AG04449 (cell line): ENCODE measurements at regions of chr11 and their contacts with region 1.

Region 1: DNA sequence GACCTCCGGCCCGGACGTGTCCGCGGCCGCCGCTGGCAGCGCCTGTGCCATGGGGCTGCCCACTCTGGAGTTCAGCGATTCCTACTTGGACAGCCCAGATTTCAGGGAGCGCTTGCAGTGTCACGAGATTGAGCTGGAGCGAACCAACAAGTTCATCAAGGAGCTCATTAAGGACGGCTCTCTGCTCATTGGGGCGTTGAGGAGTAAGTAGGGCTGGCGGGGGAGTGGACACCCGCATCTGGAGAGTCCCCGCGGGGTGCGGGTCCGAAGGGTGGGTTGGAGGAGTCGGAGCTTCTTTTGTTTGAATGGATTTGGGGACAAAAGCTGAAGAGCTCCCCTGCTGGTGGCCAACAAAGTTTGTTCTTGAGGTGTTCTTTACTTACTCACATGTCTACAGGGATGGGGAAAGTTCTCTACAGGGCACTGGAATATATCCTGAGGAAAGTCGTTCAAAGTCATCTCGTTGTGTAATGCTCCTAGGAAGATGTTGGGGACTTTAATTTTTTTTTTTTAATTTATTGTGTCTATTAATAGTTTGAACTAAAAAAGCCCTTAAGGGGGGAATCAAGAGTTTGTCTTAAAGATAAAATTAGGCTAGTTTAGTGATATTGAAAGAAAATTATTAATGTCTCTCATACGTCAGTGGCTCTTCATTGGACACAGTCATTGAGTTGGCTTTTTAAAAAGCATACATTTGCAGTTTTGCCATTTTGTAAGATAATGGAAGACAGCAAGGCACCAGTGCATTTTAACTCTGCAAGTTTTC is 725 bp downstream of the ARHGAP42 start:
- DNase-seq: no peak
- H3K4me3 ChIP-seq: peak overlapping the region; percentile 73
- CTCF ChIP-seq: peak; percentile 64

Region 2: GRCh38 chr11:100585728-100586127 is 102.1 kb before region 1 on chr11:
- CTCF ChIA-PET with region 1: no interaction called
- POLR2A ChIA-PET with region 1: no interaction called
- DNase-seq: no peak
- H3K4me3 ChIP-seq: no peak overlapping the region
- CTCF ChIP-seq: no peak

Region 3: DNA sequence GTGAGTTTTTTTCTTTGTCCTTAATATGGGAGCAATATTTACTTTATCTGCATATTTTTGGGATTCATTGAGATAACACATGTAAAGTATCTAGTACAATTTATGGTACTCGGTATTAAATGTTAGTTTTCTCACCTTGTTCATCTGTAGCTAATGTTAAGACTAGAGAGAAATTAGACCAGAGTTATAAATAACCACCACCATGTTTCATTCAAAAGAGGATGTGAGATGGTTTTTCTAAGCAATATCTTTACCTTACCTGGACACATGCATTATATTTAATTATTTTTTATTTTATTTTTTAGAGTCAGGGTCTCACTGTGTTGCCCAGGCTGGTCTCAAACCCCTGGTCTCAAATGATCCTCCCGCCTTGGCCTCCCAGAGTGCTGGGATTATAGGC is 17.6 kb after region 1 on chr11:
- CTCF ChIA-PET with region 1: interaction called, 14 read pairs
- POLR2A ChIA-PET with region 1: no interaction called
- DNase-seq: no peak
- H3K4me3 ChIP-seq: no peak overlapping the region
- CTCF ChIP-seq: no peak

Region 4: GRCh38 chr11:100849009-100849900 is 161.4 kb after region 1 on chr11:
- CTCF ChIA-PET with region 1: interaction called, 18 read pairs
- POLR2A ChIA-PET with region 1: no interaction called
- DNase-seq: peak; percentile 81
- H3K4me3 ChIP-seq: no peak overlapping the region
- CTCF ChIP-seq: no peak

Region 5: DNA sequence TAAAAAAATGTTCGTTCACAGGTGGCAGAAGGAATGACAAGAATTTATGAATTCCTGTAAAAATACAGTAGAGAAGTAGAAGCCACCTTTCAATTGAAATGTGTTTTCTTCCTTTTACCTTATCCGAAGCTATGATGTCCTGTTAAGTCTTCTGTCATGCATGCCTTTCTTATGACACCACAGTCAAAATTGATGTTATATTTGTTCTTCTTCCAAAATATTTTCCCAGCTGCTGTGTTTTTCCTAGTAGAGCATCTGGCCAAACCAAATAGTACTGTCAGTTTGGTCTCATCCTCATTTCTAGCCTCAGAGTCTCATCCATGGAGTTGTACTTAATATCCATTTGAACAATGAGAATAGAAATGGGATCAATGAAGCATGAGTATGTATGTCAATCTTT is 235.7 kb after region 1 on chr11:
- CTCF ChIA-PET with region 1: interaction called, 64 read pairs
- POLR2A ChIA-PET with region 1: interaction called, 3 read pairs
- DNase-seq: peak; percentile 9
- H3K4me3 ChIP-seq: no peak overlapping the region
- CTCF ChIP-seq: no peak

Region 6: DNA sequence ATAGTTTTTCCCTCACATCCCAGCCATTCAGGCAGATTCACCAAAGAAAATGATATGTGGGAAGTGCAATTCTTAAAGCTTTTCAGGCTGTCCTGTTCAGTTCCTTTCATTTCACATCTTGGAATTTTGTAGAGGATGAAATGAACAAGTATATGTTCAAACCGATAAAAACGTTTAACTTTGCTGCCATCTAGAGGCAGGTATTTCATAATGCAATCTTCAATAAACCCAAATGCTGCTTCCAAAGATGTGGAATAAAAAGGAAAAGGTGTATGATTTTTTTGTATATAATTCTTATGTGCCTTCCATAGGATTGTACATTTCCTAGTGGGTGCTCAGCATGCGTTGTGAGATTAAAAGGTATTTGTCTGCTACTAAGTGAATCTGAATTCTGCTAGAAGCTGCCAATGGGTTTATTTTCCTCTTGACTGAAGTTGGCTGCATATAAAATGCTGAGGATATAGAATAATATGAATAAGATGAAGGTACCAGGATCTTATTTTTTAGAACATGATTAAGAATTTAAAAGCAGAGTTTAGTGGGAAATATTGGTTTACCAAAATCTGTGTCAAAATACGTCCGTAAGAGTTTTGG is 242.5 kb after region 1 on chr11:
- CTCF ChIA-PET with region 1: interaction called, 133 read pairs
- POLR2A ChIA-PET with region 1: interaction called, 3 read pairs
- DNase-seq: peak; percentile 29
- H3K4me3 ChIP-seq: no peak overlapping the region
- CTCF ChIP-seq: no peak